ENCODE measurements at regions of chr9 and their contacts with region 1.

Region 1: DNA sequence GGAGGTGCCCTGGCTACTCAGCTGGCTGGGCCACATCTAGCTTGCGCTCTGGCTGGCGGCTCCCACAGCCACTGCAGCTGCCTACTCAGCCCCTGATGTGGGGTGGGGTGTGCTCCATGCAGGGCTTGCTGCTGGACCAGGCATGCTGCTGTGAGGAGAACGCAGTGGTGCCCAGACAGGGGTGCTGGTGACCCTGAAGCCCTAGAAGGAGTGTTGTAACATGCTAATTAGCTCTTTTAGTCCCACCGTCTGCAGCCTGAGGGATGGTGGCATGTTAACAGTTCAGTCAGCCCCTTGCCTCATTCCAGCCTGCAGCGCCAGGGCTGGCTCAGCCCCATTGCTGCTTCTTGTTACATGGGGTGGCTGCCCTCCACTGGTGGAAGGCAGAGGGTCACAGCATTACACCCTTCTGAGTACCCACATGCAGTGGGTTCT is 642.3 kb downstream of the DMRTA1 start:
- DNase-seq: no peak
- H3K4me3 Mint-ChIP-seq: no peak overlapping the region
- H3K27ac Mint-ChIP-seq: no peak overlapping the region
- H3K4me1 Mint-ChIP-seq: no peaks in the 10 kb centered on the region
- H3K27me3 Mint-ChIP-seq: no peaks in the 10 kb centered on the region

Region 2: DNA sequence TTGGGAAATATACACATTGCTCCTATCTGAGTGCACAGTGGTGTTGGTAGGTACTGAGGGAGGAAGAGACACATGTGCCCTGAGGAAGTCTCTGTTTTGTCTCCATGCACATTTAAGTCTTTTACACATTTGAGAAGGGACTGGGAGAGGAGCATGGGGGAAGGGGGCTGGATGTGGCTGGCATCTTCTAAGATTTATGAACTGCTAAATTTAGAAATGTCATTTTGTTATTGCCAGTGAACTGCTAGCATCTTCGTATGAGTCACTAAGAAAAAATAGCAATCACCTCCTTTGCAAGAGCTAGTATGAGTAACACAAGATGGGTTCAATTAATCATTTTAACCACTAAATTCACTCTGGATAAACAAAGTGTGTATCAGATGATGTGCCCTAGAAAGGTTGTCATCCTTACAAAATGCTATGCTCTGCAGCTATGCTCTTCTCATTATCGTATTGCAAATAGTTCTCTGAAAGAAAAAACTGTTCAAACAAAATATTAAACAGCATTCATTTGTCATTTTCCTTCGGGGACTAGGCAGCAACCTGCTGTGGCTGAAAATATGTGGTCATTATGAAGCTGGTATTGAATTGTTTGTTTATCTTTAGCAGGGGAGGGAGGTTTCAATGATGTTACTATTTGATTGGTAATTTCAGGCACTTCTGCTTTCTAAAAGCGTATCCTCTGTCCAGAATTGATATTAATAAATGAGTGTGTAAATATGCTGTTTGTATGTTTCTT is 405.8 kb before region 1 on chr9:
- intact Hi-C with region 1: no loop called
- DNase-seq: no peak
- H3K4me3 Mint-ChIP-seq: no peak overlapping the region
- H3K27ac Mint-ChIP-seq: peak overlapping the region; percentile 54
- H3K4me1 Mint-ChIP-seq: peaks cover 12% of the 10 kb centered on the region
- H3K27me3 Mint-ChIP-seq: no peaks in the 10 kb centered on the region

Region 3: DNA sequence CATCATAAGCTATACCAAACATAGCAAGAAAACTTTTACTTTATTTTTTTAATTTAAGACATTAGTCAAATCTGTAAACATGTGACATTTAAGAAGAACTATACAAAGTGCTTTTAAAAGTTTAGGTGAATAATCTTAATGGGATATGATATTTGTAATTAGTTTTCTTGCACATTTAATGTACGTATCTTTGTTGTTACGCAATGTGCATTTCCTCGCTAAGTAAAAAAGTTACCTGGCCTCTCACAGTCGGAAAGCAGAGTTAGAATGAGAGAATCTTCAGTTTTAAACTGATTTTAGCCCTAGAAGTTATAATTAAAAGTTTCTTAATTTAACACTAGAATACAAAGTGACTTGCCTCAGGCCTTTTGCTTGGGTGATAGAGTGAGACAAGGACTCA is 52.5 kb before region 1 on chr9:
- intact Hi-C with region 1: loop called (anchors 10 kb)
- DNase-seq: no peak
- H3K4me3 Mint-ChIP-seq: no peak overlapping the region
- H3K27ac Mint-ChIP-seq: no peak overlapping the region
- H3K4me1 Mint-ChIP-seq: no peaks in the 10 kb centered on the region
- H3K27me3 Mint-ChIP-seq: no peaks in the 10 kb centered on the region